ENCODE measurements at regions of chr2 and their contacts with region 1.

Region 1: DNA sequence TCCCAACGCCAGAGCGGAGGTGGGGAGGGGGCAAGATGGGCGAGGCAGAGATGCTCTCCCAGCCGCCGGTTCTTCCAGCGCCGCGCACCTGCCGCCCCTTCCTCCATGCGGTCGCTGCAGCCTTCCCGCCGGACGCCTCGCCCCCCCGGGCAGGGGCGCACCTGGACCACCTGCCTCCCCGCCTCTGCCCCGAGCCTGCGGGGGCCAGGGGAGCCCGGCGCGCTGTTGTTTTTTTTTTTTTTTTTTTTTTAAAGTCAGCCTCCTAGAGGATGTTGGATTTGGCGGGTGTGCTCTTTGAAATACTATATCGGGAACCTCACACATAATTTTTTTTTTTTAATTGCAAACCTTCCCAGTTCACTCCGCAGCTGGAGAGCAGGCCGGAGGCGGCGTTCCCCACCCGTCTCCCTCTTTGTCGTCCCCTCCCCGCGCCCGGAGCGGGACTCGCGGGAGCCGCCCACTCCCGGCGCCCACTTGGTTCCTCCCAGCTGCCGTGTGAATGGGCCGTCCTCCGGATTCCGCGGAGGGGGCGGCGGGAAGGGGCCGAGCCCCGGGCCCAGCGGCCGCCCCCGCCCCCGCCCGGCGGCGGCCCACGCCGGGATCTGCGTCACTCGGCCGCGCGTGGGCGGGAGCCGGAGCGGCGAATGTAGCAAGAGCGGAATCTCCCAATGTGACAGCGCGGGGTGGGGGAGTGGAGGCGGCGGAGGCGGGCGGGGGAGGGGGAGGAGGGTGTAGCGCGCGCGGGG is 421 bp upstream of the NAB1 start:
- DNase-seq: peak; percentile 91
- ATAC-seq: peak; percentile 77
- H3K4me3 Mint-ChIP-seq: peak overlapping the region; percentile 83
- H3K27ac Mint-ChIP-seq: peak overlapping the region; percentile 79
- H3K4me1 Mint-ChIP-seq: peaks cover 22% of the 10 kb centered on the region
- H3K27me3 Mint-ChIP-seq: no peaks in the 10 kb centered on the region
- CTCF ChIP-seq: no peak

Region 2: GRCh38 chr2:189440947-189441708 is 1207.3 kb before region 1 on chr2 and contains the start of gene WDR75:
- CTCF ChIA-PET with region 1: no interaction called
- POLR2A ChIA-PET with region 1: no interaction called
- intact Hi-C with region 1: loop called (anchors 2 kb)
- DNase-seq: peak; percentile 79
- ATAC-seq: peak; percentile 94
- H3K4me3 Mint-ChIP-seq: peak within 1 kb of the TSS; percentile 98
- H3K27ac Mint-ChIP-seq: peak within 1 kb of the TSS; percentile 99
- H3K4me1 Mint-ChIP-seq: peaks cover 26% of the 10 kb centered on the region
- H3K27me3 Mint-ChIP-seq: no peaks in the 10 kb centered on the region
- CTCF ChIP-seq: no peak
- total RNA-seq, gene WDR75: 53.0 and 61.2 TPM in 2 replicates

Region 3: GRCh38 chr2:190408538-190409271 is 239.8 kb before region 1 on chr2:
- CTCF ChIA-PET with region 1: no interaction called
- POLR2A ChIA-PET with region 1: no interaction called
- intact Hi-C with region 1: loop called (anchors 2 kb)
- DNase-seq: no peak
- ATAC-seq: peak; percentile 55
- H3K4me3 Mint-ChIP-seq: peak overlapping the region; percentile 84
- H3K27ac Mint-ChIP-seq: peak overlapping the region; percentile 86
- H3K4me1 Mint-ChIP-seq: peaks cover 26% of the 10 kb centered on the region
- H3K27me3 Mint-ChIP-seq: no peaks in the 10 kb centered on the region
- CTCF ChIP-seq: no peak

Region 4: DNA sequence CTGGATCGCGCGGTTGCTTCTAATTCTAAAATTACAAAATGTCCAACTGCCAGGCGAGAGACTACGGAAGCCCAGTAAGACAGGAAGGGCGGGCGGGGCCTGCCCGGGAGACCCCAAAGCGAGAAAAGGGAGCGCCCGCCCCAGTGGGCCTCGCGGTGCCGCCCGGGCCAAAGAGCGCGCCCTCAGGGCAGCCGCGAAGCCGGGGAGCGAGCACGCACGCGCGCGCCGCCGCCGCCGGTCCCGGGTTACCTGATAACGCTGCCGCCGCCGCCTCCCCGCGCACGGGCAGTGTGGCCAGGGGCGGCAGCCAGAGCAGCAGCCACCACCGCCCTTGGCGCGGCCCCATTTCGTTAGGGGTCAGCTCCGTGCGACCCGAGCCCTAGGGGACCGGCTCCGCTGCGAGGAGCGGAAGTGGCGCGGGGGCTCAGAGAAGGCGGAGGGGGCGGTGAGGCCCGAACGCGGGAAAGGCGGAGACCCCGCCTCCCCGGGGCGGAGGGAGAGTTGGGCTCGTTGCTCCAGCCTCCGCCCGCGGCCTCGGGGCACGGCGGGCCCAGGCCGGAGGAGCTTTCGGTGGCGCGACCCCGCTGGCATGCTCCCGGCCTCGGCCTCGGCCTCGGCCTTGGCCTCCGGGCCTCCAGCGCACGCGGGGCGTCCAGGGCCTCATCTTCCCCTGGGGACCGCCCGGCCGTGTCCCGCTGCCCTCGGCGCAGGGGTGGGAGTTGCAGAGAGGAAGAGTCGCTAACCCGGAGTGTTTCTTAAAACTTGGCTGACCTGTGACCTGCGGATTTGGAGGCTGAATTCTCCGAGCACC is 113.9 kb before region 1 on chr2 and contains the start of gene NEMP2:
- CTCF ChIA-PET with region 1: no interaction called
- POLR2A ChIA-PET with region 1: interaction called, 34 read pairs
- intact Hi-C with region 1: loop called (anchors 1 kb)
- DNase-seq: peak; percentile 90
- ATAC-seq: peak; percentile 80
- H3K4me3 Mint-ChIP-seq: peak within 1 kb of the TSS; percentile 97
- H3K27ac Mint-ChIP-seq: peak within 1 kb of the TSS; percentile 100
- H3K4me1 Mint-ChIP-seq: peaks cover 56% of the 10 kb centered on the region
- H3K27me3 Mint-ChIP-seq: no peaks in the 10 kb centered on the region
- CTCF ChIP-seq: no peak
- total RNA-seq, gene NEMP2: 14.2 and 15.6 TPM in 2 replicates

Region 5: GRCh38 chr2:190636373-190636772 is 12.1 kb before region 1 on chr2:
- CTCF ChIA-PET with region 1: no interaction called
- POLR2A ChIA-PET with region 1: interaction called, 17 read pairs
- intact Hi-C with region 1: no loop called
- DNase-seq: no peak
- ATAC-seq: no peak
- H3K4me3 Mint-ChIP-seq: no peak overlapping the region
- H3K27ac Mint-ChIP-seq: no peak overlapping the region
- H3K4me1 Mint-ChIP-seq: peaks cover 8% of the 10 kb centered on the region
- H3K27me3 Mint-ChIP-seq: no peaks in the 10 kb centered on the region
- CTCF ChIP-seq: no peak

Region 6: DNA sequence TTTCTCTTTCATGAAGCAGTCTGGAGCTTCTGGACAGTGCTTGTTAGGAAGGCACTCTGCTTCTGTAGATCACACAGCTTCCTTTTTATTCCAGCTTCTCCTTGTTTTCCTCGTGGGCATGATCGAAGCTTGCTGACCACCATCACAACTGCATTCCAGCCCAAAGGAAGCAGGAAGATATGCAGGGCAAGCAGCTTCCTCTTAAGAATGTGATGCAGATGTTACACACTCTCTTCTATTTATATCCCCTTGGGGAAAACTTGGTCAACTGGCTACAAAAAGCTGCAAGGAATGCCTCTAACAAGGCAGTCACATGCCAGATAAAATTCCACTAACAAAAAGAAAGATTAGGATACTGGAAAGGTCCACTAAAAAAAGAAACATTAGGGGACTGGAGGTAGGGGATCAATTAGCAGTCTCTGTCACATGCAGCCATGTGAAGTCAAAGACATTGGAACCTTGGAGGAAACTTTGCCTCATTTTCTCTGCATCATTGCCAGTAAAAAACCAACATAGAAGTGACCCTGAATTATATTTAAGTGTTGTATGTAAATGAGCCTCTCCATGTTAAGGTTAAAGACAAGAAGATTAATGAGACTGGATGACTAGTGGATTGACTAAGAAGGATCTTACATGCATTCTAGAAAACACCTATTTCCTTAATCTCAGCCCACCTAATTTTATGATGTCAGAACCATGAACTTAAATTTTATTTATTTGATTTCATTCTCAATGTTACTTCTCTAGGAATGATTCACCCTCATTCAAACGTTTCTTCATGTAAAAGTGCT is 98.7 kb after region 1 on chr2:
- CTCF ChIA-PET with region 1: no interaction called
- POLR2A ChIA-PET with region 1: no interaction called
- intact Hi-C with region 1: no loop called
- DNase-seq: no peak
- ATAC-seq: no peak
- H3K4me3 Mint-ChIP-seq: no peak overlapping the region
- H3K27ac Mint-ChIP-seq: no peak overlapping the region
- H3K4me1 Mint-ChIP-seq: no peaks in the 10 kb centered on the region
- H3K27me3 Mint-ChIP-seq: no peaks in the 10 kb centered on the region
- CTCF ChIP-seq: no peak

Region 7: GRCh38 chr2:190880378-190881073 is 232.1 kb after region 1 on chr2 and contains the start of gene GLS:
- CTCF ChIA-PET with region 1: no interaction called
- POLR2A ChIA-PET with region 1: interaction called, 4 read pairs
- intact Hi-C with region 1: loop called (anchors 1 kb)
- DNase-seq: peak; percentile 90
- ATAC-seq: peak; percentile 82
- H3K4me3 Mint-ChIP-seq: peak within 1 kb of the TSS; percentile 97
- H3K27ac Mint-ChIP-seq: peak within 1 kb of the TSS; percentile 97
- H3K4me1 Mint-ChIP-seq: peaks cover 44% of the 10 kb centered on the region
- H3K27me3 Mint-ChIP-seq: no peaks in the 10 kb centered on the region
- CTCF ChIP-seq: no peak
- total RNA-seq, gene GLS: 212 and 255 TPM in 2 replicates

Measured in activated B cell treated with CpG ODN at 0.5 μM for 24 hours (primary cell).